Colonic mucosa (tissue), 4 donors: ENCODE measurements at regions of chr20 and their contacts with region 1.

Region 1: DNA sequence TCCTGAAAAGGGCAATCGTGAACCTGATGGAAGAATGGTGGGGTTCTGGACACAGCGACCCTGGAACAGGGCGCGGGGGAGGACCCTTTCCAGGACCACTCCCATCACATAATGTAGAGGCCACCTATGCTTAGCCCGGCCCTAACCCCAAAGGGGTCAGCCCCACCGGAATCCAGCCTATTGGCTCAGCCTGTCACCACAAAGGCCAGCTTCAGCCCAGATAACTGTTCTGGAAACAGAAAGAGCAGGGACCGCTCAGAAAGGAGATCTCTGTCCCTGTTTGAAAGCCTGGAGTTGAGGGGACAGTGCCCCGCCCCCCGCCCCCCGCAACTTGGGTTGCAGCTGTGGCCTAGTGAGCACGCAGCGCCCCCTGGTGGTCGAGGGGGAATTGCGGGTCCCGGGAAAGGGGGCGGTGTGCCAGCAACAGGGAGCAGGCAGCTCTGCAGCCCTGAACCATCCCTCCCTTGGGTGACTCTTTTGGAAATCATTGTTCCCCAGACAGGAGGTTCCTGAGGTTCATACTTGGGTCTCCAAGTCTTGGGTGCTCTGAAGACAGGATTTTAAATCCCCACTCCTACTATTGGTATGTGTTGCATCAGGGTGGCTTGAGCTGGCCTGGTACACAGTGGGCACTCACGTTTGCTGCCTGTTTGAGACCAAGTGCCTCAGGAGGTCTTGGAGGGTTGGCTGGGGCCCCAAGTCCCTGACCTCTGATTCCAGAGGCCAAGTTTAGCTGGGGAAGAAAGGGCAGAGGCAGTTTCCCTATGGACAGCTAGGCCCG is 1.5 kb downstream of the SIGLEC1 start:
- DNase-seq: peak; percentile 75
- H3K4me3 ChIP-seq: no peak overlapping the region
- H3K27ac ChIP-seq: no peak overlapping the region
- H3K4me1 ChIP-seq: no peaks in the 10 kb centered on the region
- H3K27me3 ChIP-seq: no peaks in the 10 kb centered on the region
- CTCF ChIP-seq: peak; percentile 95

Region 2: GRCh38 chr20:3679749-3680700 is 30.9 kb before region 1 on chr20:
- intact Hi-C with region 1: loop called (anchors 1 kb)
- DNase-seq: peak; percentile 41
- H3K4me3 ChIP-seq: no peak overlapping the region
- H3K27ac ChIP-seq: peak overlapping the region; percentile 53
- H3K4me1 ChIP-seq: no peaks in the 10 kb centered on the region
- H3K27me3 ChIP-seq: peaks cover 20% of the 10 kb centered on the region
- CTCF ChIP-seq: no peak

Region 3: DNA sequence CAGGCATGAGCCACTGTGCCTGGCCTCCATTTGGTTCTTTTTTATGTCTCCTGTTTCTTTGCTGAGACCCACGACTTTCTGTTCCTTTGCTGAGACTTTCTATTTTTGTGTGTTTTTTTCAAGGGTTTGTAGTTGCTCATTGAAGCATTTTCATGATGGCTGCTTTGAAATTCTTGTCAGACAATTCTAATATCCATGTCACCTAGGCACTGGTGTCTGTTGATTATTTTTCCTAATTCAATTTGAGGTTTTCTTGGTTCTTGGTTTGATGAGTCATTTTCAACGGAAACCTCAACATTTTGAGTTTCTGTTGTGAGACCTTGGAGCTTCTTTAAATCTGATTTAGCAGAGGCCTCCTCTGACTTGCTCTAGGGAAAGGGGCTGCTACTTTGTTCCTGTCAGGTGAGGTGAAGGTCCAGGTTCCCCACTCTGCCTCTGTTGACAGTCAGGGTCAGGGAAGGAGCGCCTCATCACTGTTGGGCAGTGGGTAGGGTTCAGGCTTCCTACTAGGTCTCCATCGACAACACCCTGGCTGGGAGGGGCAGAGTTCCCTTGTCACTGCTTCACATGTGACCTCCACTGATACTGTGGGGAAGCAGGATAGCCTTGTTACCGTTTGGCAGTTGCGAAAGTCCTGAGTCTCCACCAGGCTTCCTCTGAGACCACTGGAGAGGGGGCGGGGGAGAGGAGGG is 371.7 kb after region 1 on chr20:
- intact Hi-C with region 1: no loop called
- DNase-seq: no peak
- H3K4me3 ChIP-seq: no peak overlapping the region
- H3K27ac ChIP-seq: peak overlapping the region; percentile 2
- H3K4me1 ChIP-seq: no peaks in the 10 kb centered on the region
- H3K27me3 ChIP-seq: no peaks in the 10 kb centered on the region
- CTCF ChIP-seq: no peak

Region 4: DNA sequence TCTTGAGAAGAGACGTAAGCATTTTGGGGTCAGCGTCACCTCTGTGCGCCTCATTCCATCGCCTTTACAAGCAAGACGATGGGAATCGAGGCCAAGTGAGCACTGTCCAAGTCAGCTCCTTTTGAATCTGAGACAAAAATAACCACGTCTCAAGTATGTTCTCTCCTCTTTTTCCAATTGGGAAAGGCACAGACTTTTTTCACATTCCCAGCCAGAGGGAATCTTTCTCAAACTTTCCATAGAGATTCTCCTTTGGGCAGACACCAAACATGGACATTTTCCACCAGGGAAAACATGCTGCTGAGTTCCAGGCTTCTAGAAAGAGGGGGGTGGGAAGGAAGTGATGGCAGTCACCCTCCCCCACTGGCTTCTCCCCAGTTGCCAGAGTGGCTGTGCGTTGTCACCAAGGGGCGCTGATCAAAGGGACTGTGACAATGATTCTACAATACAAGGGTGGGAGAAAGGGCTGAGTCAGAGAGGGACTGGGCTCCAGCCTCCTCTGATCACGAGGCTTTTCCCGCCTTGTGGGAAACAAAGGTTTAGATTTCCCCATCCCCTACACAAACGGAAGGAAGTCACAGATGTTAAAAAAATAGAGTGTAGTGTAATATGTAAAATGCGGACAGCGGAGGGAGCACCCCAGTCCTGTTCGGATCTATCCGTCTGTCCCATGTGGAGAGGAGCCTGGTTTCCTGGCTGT is 586.4 kb after region 1 on chr20:
- intact Hi-C with region 1: no loop called
- DNase-seq: no peak
- H3K4me3 ChIP-seq: no peak overlapping the region
- H3K27ac ChIP-seq: no peak overlapping the region
- H3K4me1 ChIP-seq: no peaks in the 10 kb centered on the region
- H3K27me3 ChIP-seq: no peaks in the 10 kb centered on the region
- CTCF ChIP-seq: no peak